ENCODE measurements at regions of chr11 and their contacts with region 1.

Region 1: DNA sequence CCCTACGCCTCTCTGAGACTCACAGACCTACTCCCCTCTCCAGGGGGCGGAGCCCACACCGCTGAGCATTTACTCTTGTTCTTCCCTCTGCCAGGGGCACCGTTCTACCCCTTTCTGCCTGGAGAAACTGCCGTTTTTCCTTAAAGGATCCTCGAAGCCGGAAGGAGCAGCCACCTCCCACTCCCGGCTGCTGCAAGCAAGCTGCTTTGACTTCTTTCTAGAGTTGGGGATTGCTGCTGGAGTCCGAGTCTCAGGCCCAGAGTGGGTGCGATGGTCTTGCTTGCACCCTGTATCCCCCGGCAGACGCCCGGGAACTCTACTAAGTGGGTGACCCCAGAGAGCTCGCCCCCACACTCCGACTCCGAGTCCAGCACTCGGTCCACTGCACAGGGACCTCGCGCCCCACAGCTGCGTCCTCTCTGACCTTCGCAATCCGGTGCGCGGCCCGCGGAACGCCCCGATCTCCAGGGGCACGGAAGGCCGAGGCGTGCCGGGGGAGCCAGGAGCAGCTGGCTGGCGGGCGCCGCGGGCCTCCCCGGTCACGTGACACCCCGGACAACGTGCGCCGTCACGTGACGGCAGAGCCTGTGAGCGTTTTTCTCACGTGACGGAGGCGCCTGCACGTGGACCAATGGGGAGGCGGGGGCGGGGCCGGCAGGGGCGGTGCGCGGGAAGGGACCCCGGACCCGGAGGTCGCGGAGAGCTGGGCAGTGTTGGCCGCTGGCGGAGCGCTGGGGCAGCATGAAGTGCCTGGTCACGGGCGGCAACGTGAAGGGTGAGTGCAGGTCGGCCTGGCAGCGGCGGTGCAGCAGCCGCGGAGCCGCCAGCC is at the start of gene RAD9A:
- DNase-seq: peak; percentile 95
- H3K4me3 Mint-ChIP-seq: peak within 1 kb of the TSS; percentile 92
- H3K27ac Mint-ChIP-seq: peak within 1 kb of the TSS; percentile 76
- H3K4me1 Mint-ChIP-seq: peaks cover 33% of the 10 kb centered on the region
- H3K27me3 Mint-ChIP-seq: no peaks in the 10 kb centered on the region
- total RNA-seq, gene RAD9A: 31.0 to 39.1 TPM

Region 2: GRCh38 chr11:66842896-66843775 is 548.4 kb before region 1 on chr11 and contains the start of gene RCE1:
- CTCF ChIA-PET with region 1: no interaction called
- POLR2A ChIA-PET with region 1: no interaction called
- intact Hi-C with region 1: no loop called
- DNase-seq: peak; percentile 94
- H3K4me3 Mint-ChIP-seq: peak within 1 kb of the TSS; percentile 97
- H3K27ac Mint-ChIP-seq: peak within 1 kb of the TSS; percentile 93
- H3K4me1 Mint-ChIP-seq: peaks cover 49% of the 10 kb centered on the region
- H3K27me3 Mint-ChIP-seq: no peaks in the 10 kb centered on the region
- total RNA-seq, gene RCE1: 22.5 to 24.4 TPM

Region 3: DNA sequence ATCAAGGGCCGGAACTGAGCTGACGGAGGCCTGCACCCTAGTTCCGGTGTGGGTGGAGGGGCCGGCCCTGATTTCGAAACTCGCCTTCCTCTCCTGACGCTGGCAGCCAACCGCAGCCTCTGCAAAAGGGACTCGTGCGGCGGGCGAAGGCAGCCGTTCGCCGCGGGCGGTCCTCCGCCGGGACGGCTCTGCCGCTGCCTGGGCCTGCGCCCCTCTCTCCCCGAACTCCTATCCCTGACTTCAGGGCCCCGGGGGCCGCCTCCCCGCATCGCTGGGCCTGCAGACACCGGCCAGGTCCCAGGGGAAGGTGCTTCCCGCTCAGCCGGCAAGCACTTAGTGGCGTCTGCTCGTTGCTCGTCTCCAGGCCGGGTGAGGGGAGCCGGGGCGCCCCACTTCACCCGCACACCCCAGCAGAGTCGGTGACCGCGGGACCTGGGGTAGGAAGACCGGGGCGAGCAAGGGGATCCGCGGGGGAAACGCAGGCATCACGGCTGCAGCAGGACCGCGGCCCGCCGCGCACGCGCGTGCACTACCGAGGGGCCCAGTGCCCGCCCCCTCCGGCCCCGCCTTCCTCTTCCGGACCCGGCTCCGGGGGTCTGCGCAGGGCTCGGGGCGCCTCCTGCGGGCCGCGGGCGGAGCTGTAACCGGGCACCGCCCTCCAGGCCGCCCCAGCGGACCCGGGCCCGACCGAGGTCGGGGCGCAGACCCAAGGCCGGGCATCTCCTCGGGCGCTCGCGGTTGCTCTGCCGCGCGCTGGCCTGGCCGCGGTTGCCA is 102.9 kb before region 1 on chr11:
- CTCF ChIA-PET with region 1: no interaction called
- POLR2A ChIA-PET with region 1: no interaction called
- intact Hi-C with region 1: no loop called
- DNase-seq: peak; percentile 95
- H3K4me3 Mint-ChIP-seq: peak overlapping the region; percentile 66
- H3K27ac Mint-ChIP-seq: peak overlapping the region; percentile 97
- H3K4me1 Mint-ChIP-seq: peaks cover 62% of the 10 kb centered on the region
- H3K27me3 Mint-ChIP-seq: no peaks in the 10 kb centered on the region

Region 4: GRCh38 chr11:67428052-67428914 is 36.8 kb after region 1 on chr11 and contains the start of gene RPS6KB2:
- CTCF ChIA-PET with region 1: no interaction called
- POLR2A ChIA-PET with region 1: no interaction called
- intact Hi-C with region 1: loop called (anchors 5 kb)
- DNase-seq: peak; percentile 100
- H3K4me3 Mint-ChIP-seq: peak within 1 kb of the TSS; percentile 91
- H3K27ac Mint-ChIP-seq: peak within 1 kb of the TSS; percentile 91
- H3K4me1 Mint-ChIP-seq: peaks cover 32% of the 10 kb centered on the region
- H3K27me3 Mint-ChIP-seq: no peaks in the 10 kb centered on the region
- total RNA-seq, gene RPS6KB2: 57.4 to 57.5 TPM

Region 5: DNA sequence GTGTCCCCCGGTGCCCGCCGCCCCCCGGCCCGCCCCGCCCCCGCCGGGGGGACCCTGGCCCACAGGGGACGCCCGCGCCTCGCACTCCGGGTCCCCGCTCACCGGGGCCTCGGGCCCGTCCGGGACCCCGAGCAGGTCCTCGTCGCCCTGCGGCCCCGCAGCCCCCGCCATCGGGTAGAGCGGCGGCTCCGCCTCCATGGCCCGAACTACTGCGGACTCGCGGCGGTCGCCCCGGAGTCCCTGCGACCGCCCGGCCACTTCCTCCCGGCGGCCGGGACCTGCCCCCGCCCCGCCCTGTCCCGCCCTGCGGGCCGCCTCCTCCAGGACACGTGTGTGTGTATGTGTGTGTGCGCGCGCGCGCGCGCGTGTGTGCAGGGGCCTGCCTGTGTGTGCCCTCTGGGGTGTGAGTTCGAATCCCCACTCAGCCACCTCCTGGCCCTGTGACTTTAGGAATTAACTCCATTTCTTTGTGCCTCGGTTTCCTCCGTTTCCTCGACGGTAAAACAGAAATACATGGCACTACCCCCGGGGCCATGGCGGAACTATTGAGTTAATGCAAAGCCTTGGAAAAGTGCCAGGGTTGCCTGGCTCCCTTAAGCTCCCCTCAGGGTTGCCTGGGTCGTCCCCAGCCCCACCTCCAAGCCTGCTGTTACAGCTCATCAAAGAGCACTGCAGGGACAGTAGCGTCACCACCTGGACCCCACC is 612.5 kb after region 1 on chr11 and contains the start of gene UNC93B1:
- CTCF ChIA-PET with region 1: no interaction called
- POLR2A ChIA-PET with region 1: no interaction called
- intact Hi-C with region 1: no loop called
- DNase-seq: peak; percentile 91
- H3K4me3 Mint-ChIP-seq: peak within 1 kb of the TSS; percentile 76
- H3K27ac Mint-ChIP-seq: no peak within 1 kb of the TSS
- H3K4me1 Mint-ChIP-seq: peaks cover 15% of the 10 kb centered on the region
- H3K27me3 Mint-ChIP-seq: no peaks in the 10 kb centered on the region
- total RNA-seq, gene UNC93B1: 20.0 to 21.5 TPM

Measured in activated CD4-positive, alpha-beta memory T cell treated with anti-CD3 and anti-CD28 coated beads for 36 hours (primary cell).